ENCODE measurements at regions of chr7 and their contacts with region 1.

Region 1: GRCh38 chr7:155984609-155985405 is 172.5 kb upstream of the SHH start:
- DNase-seq: no peak
- H3K4me3 ChIP-seq: no peak overlapping the region
- H3K27ac ChIP-seq: no peak overlapping the region
- H3K27me3 ChIP-seq: no peaks in the 10 kb centered on the region
- CTCF ChIP-seq: no peak

Region 2: GRCh38 chr7:156006024-156006423 is 21.2 kb after region 1 on chr7:
- CTCF ChIA-PET with region 1: interaction called, 10 read pairs
- POLR2A ChIA-PET with region 1: no interaction called
- DNase-seq: no peak
- H3K4me3 ChIP-seq: no peak overlapping the region
- H3K27ac ChIP-seq: no peak overlapping the region
- H3K27me3 ChIP-seq: no peaks in the 10 kb centered on the region
- CTCF ChIP-seq: no peak

Region 3: GRCh38 chr7:156127166-156128134 is 142.6 kb after region 1 on chr7:
- CTCF ChIA-PET with region 1: no interaction called
- POLR2A ChIA-PET with region 1: no interaction called
- DNase-seq: no peak
- H3K4me3 ChIP-seq: no peak overlapping the region
- H3K27ac ChIP-seq: no peak overlapping the region
- H3K27me3 ChIP-seq: no peaks in the 10 kb centered on the region
- CTCF ChIP-seq: no peak

Measured in AG04450 (cell line).